ENCODE measurements at regions of chr12 and their contacts with region 1.

Region 1: GRCh38 chr12:47904713-47905310 is at the start of gene VDR:
- DNase-seq: peak; percentile 21 to 80
- ATAC-seq: peak; percentile 74 to 84 (median 83)
- H3K4me3 ChIP-seq: peak within 1 kb of the TSS; percentile 47
- H3K4me3 Mint-ChIP-seq: peak within 1 kb of the TSS; percentile 86
- H3K27ac ChIP-seq: peak within 1 kb of the TSS; percentile 4
- H3K27ac Mint-ChIP-seq: peak within 1 kb of the TSS in 1 of 2 donors; percentile 75
- H3K4me1 ChIP-seq: peaks cover 54% of the 10 kb centered on the region
- H3K4me1 Mint-ChIP-seq: peaks cover 40 to 47% of the 10 kb centered on the region in 2 donors
- H3K27me3 ChIP-seq: peaks cover 25% of the 10 kb centered on the region
- H3K27me3 Mint-ChIP-seq: peaks cover 32 to 41% of the 10 kb centered on the region in 2 donors
- CTCF ChIP-seq: peak; percentile 29
- total RNA-seq, gene VDR: 1.1 to 2.5 (median 1.6) TPM

Region 2: DNA sequence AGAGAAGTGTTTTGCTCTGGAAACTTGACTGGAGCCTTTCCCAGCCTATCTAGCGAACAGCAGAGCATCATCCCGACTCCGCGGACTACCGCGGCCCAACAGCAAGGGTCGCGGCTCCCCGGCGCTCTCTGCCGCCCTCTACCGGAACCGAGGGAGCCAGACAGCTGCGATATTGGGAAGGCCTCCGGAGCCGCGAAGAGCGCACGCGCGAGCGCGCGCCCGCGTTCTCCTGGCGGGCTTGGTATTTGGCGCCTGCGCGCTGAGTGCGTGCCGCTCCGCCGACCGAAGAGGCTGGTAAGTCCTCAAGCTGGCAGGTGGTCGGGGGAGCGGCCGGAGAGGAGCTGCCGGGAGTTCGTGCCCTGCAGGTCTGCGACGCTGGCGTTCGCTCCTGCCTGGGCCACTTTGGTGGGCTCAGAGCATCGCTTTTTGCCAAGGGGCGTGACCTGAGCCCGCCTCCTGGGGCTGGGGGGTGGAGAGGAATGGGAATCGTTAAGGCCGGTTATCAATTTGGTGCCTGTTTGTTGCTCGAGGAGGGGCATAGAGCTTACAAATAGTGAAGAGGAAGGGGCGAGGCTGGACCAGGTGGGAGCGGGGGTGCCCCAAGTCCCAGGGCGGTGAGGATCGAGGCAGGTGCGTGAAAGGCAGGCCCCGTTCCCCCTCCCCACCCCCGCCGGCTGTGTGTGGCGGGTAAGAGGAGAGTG is 58.7 kb after region 1 on chr12 and contains the start of gene TMEM106C:
- intact Hi-C with region 1: loop called (anchors 1 kb)
- DNase-seq: peak; percentile 90 to 98
- ATAC-seq: peak; percentile 98 to 99 (median 99)
- H3K4me3 ChIP-seq: peak within 1 kb of the TSS; percentile 99
- H3K4me3 Mint-ChIP-seq: peak within 1 kb of the TSS; percentile 98
- H3K27ac ChIP-seq: peak within 1 kb of the TSS; percentile 34
- H3K27ac Mint-ChIP-seq: peak within 1 kb of the TSS; percentile 83 to 98
- H3K4me1 ChIP-seq: peaks cover 14% of the 10 kb centered on the region
- H3K4me1 Mint-ChIP-seq: peaks cover 23 to 41% of the 10 kb centered on the region in 2 donors
- H3K27me3 ChIP-seq: no peaks in the 10 kb centered on the region
- H3K27me3 Mint-ChIP-seq: peaks cover 0 to 12% of the 10 kb centered on the region in 2 donors
- CTCF ChIP-seq: peak; percentile 94
- total RNA-seq, gene TMEM106C: 19.1 to 26.2 (median 22.5) TPM

Region 3: GRCh38 chr12:48165094-48165981 is 260.5 kb after region 1 on chr12:
- intact Hi-C with region 1: loop called (anchors 5 kb)
- DNase-seq: peak in 1 of 2 donors; percentile 89
- ATAC-seq: peak; percentile 76 to 93 (median 81)
- H3K4me3 ChIP-seq: no peak overlapping the region
- H3K4me3 Mint-ChIP-seq: no peak overlapping the region
- H3K27ac ChIP-seq: no peak overlapping the region
- H3K27ac Mint-ChIP-seq: no peak overlapping the region
- H3K4me1 ChIP-seq: no peaks in the 10 kb centered on the region
- H3K4me1 Mint-ChIP-seq: no peaks in the 10 kb centered on the region
- H3K27me3 ChIP-seq: no peaks in the 10 kb centered on the region
- H3K27me3 Mint-ChIP-seq: peaks cover 17% of the 10 kb centered on the region in 2 donors
- CTCF ChIP-seq: peak; percentile 97

Region 4: GRCh38 chr12:48379780-48380179 is 475.0 kb after region 1 on chr12:
- intact Hi-C with region 1: no loop called
- DNase-seq: no peak
- ATAC-seq: no peak
- H3K4me3 ChIP-seq: no peak overlapping the region
- H3K4me3 Mint-ChIP-seq: no peak overlapping the region
- H3K27ac ChIP-seq: no peak overlapping the region
- H3K27ac Mint-ChIP-seq: no peak overlapping the region
- H3K4me1 ChIP-seq: no peaks in the 10 kb centered on the region
- H3K4me1 Mint-ChIP-seq: no peaks in the 10 kb centered on the region
- H3K27me3 ChIP-seq: peaks cover 2% of the 10 kb centered on the region
- H3K27me3 Mint-ChIP-seq: peaks cover 21 to 53% of the 10 kb centered on the region in 2 donors
- CTCF ChIP-seq: no peak